ENCODE measurements at regions of chr6 and their contacts with region 1.

Region 1: GRCh38 chr6:138231381-138231897 is 13.1 kb upstream of the PBOV1 start:
- DNase-seq: peak; percentile 56
- H3K4me3 ChIP-seq: no peak overlapping the region
- H3K27ac ChIP-seq: peak overlapping the region; percentile 45
- H3K4me1 ChIP-seq: peaks cover 15% of the 10 kb centered on the region
- H3K27me3 ChIP-seq: no peaks in the 10 kb centered on the region
- CTCF ChIP-seq: no peak
- POLR2A ChIP-seq: no peak

Region 2: GRCh38 chr6:138246650-138247440 is 15.4 kb after region 1 on chr6:
- CTCF ChIA-PET with region 1: interaction called, 10 read pairs
- POLR2A ChIA-PET with region 1: no interaction called
- dilution Hi-C with region 1: no loop called
- intact Hi-C with region 1: no loop called
- DNase-seq: peak; percentile 15
- H3K4me3 ChIP-seq: no peak overlapping the region
- H3K27ac ChIP-seq: no peak overlapping the region
- H3K4me1 ChIP-seq: peaks cover 4% of the 10 kb centered on the region
- H3K27me3 ChIP-seq: no peaks in the 10 kb centered on the region
- CTCF ChIP-seq: no peak
- POLR2A ChIP-seq: no peak

Region 3: GRCh38 chr6:138673346-138674014 is 442.0 kb after region 1 on chr6:
- CTCF ChIA-PET with region 1: no interaction called
- POLR2A ChIA-PET with region 1: no interaction called
- dilution Hi-C with region 1: no loop called
- intact Hi-C with region 1: no loop called
- DNase-seq: no peak
- H3K4me3 ChIP-seq: no peak overlapping the region
- H3K27ac ChIP-seq: no peak overlapping the region
- H3K4me1 ChIP-seq: no peaks in the 10 kb centered on the region
- H3K27me3 ChIP-seq: no peaks in the 10 kb centered on the region
- CTCF ChIP-seq: no peak
- POLR2A ChIP-seq: no peak

Region 4: GRCh38 chr6:138817822-138818308 is 586.4 kb after region 1 on chr6:
- CTCF ChIA-PET with region 1: no interaction called
- POLR2A ChIA-PET with region 1: no interaction called
- dilution Hi-C with region 1: no loop called
- intact Hi-C with region 1: no loop called
- DNase-seq: peak; percentile 56
- H3K4me3 ChIP-seq: no peak overlapping the region
- H3K27ac ChIP-seq: no peak overlapping the region
- H3K4me1 ChIP-seq: peaks cover 23% of the 10 kb centered on the region
- H3K27me3 ChIP-seq: no peaks in the 10 kb centered on the region
- CTCF ChIP-seq: no peak
- POLR2A ChIP-seq: no peak